Activated CD8-positive, alpha-beta T cell treated with anti-CD3 and anti-CD28 coated beads for 36 hours (primary cell): ENCODE measurements at regions of chr1 and their contacts with region 1.

Region 1: DNA sequence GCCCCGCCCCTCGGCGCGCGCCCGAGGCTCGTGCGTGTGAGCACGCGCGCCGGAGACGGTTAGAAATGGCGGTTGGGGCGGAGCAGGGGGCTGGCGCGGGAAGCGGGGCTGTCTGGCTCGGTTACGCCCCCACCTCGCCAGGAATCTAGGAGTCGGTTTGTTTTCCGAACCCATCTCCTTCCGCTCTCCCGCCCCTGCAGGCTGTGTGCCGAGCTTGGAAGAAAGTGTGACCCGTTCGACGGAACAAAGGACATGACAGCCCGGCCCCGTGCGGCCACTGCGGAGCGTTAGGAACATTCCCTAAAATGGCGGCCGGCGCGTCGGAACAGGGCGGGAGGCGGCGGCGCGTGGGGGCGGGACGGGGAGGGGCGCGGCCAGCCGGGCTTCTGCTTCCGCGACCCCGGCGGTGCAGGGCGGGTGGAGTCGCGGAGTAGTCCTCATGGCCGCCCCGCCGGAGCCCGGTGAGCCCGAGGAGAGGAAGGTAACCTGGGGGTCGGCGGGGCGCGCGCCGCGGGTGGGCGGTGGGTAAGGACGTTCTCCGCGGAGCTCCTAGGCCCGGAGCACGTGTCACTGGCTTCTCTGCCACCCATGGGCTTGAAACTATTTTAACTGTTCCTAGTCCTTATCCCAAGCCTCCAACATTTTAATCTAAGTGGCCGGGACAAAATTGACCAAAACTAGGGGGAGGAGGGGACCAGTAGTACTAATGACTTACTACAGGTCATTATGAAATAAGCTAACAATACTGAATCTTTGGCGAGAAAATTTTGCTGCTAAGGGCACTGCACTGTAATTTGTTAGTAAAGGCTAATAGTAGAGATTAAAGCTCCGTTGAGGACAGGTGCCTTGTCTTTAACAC is at the start of gene COX20:
- DNase-seq: peak; percentile 88
- ATAC-seq: peak; percentile 61
- H3K4me3 Mint-ChIP-seq: peak within 1 kb of the TSS; percentile 93
- H3K27ac Mint-ChIP-seq: peak within 1 kb of the TSS; percentile 98
- H3K4me1 Mint-ChIP-seq: peaks cover 38% of the 10 kb centered on the region
- H3K27me3 Mint-ChIP-seq: no peaks in the 10 kb centered on the region
- CTCF ChIP-seq: no peak
- total RNA-seq, gene COX20: 33.1 to 34.7 TPM

Region 2: GRCh38 chr1:244751271-244751895 is 84.1 kb before region 1 on chr1:
- CTCF ChIA-PET with region 1: no interaction called
- POLR2A ChIA-PET with region 1: no interaction called
- intact Hi-C with region 1: no loop called
- DNase-seq: no peak
- ATAC-seq: no peak
- H3K4me3 Mint-ChIP-seq: no peak overlapping the region
- H3K27ac Mint-ChIP-seq: no peak overlapping the region
- H3K4me1 Mint-ChIP-seq: no peaks in the 10 kb centered on the region
- H3K27me3 Mint-ChIP-seq: no peaks in the 10 kb centered on the region
- CTCF ChIP-seq: no peak

Region 3: GRCh38 chr1:244822878-244823277 is 12.6 kb before region 1 on chr1:
- CTCF ChIA-PET with region 1: no interaction called
- POLR2A ChIA-PET with region 1: interaction called, 13 read pairs
- intact Hi-C with region 1: no loop called
- DNase-seq: no peak
- ATAC-seq: no peak
- H3K4me3 Mint-ChIP-seq: no peak overlapping the region
- H3K27ac Mint-ChIP-seq: no peak overlapping the region
- H3K4me1 Mint-ChIP-seq: no peaks in the 10 kb centered on the region
- H3K27me3 Mint-ChIP-seq: no peaks in the 10 kb centered on the region
- CTCF ChIP-seq: no peak

Region 4: DNA sequence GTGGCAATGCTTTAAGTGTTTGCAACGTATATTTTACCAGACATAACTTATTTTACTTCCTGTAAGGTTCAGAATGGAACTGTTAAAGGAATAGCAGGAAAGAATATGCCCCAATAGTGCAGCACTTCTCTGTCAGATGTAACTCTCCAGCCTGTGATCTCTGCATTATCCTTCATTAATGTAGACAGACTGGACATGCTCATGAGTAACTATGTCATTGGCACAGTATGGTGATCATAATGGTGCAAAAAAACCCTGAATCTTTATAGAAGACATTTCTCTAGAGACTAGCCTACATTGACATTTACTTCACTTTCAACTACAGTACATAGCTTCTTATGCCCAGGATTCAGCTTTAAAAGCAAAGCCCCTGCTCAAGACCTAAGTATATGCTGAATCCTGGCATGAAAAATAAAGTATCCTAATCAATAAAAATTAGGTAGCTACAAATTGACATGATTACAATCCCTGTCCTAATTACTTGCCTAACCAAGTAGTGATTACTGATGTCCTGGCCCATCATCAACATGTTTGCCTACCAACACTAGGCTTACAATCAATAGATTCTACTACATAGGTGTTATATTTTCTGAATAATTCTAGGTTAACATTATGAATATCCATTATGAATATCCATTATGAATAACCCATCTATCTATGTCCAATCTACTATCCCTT is 13.8 kb after region 1 on chr1:
- CTCF ChIA-PET with region 1: interaction called, 16 read pairs
- POLR2A ChIA-PET with region 1: interaction called, 554 read pairs
- intact Hi-C with region 1: no loop called
- DNase-seq: no peak
- ATAC-seq: no peak
- H3K4me3 Mint-ChIP-seq: no peak overlapping the region
- H3K27ac Mint-ChIP-seq: peak overlapping the region; percentile 46
- H3K4me1 Mint-ChIP-seq: peaks cover 75% of the 10 kb centered on the region
- H3K27me3 Mint-ChIP-seq: no peaks in the 10 kb centered on the region
- CTCF ChIP-seq: no peak

Region 5: GRCh38 chr1:244854865-244855578 is 19.5 kb after region 1 on chr1:
- CTCF ChIA-PET with region 1: interaction called, 16 read pairs
- POLR2A ChIA-PET with region 1: interaction called, 554 read pairs
- intact Hi-C with region 1: no loop called
- DNase-seq: no peak
- ATAC-seq: peak; percentile 27
- H3K4me3 Mint-ChIP-seq: peak overlapping the region; percentile 54
- H3K27ac Mint-ChIP-seq: peak overlapping the region; percentile 88
- H3K4me1 Mint-ChIP-seq: peaks cover 84% of the 10 kb centered on the region
- H3K27me3 Mint-ChIP-seq: no peaks in the 10 kb centered on the region
- CTCF ChIP-seq: no peak

Region 6: GRCh38 chr1:244970661-244971551 is 135.4 kb after region 1 on chr1:
- CTCF ChIA-PET with region 1: interaction called, 3 read pairs
- POLR2A ChIA-PET with region 1: interaction called, 14 read pairs
- intact Hi-C with region 1: loop called (anchors 10 kb)
- DNase-seq: peak; percentile 94
- ATAC-seq: peak; percentile 87
- H3K4me3 Mint-ChIP-seq: peak overlapping the region; percentile 88
- H3K27ac Mint-ChIP-seq: peak overlapping the region; percentile 97
- H3K4me1 Mint-ChIP-seq: peaks cover 11% of the 10 kb centered on the region
- H3K27me3 Mint-ChIP-seq: no peaks in the 10 kb centered on the region
- CTCF ChIP-seq: peak; percentile 55